Activated B cell treated with CpG ODN at 0.5 μM for 24 hours (primary cell): ENCODE measurements at regions of chr16 and their contacts with region 1.

Region 1: GRCh38 chr16:68508641-68509240 is 30.4 kb upstream of the ZFP90 start:
- DNase-seq: no peak
- ATAC-seq: no peak
- H3K4me3 Mint-ChIP-seq: no peak overlapping the region
- H3K27ac Mint-ChIP-seq: no peak overlapping the region
- H3K4me1 Mint-ChIP-seq: peaks cover 5% of the 10 kb centered on the region
- H3K27me3 Mint-ChIP-seq: peaks cover 8% of the 10 kb centered on the region
- CTCF ChIP-seq: no peak

Region 2: GRCh38 chr16:67892899-67893742 is 615.6 kb before region 1 on chr16 and contains the start of gene PSKH1:
- CTCF ChIA-PET with region 1: no interaction called
- POLR2A ChIA-PET with region 1: no interaction called
- intact Hi-C with region 1: no loop called
- DNase-seq: peak; percentile 80
- ATAC-seq: peak; percentile 99
- H3K4me3 Mint-ChIP-seq: peak within 1 kb of the TSS; percentile 94
- H3K27ac Mint-ChIP-seq: peak within 1 kb of the TSS; percentile 86
- H3K4me1 Mint-ChIP-seq: peaks cover 31% of the 10 kb centered on the region
- H3K27me3 Mint-ChIP-seq: no peaks in the 10 kb centered on the region
- CTCF ChIP-seq: no peak
- total RNA-seq, gene PSKH1: 19.2 and 22.0 TPM in 2 replicates

Region 3: GRCh38 chr16:68367030-68367429 is 141.7 kb before region 1 on chr16:
- CTCF ChIA-PET with region 1: interaction called, 5 read pairs
- POLR2A ChIA-PET with region 1: no interaction called
- intact Hi-C with region 1: loop called (anchors 1 kb)
- DNase-seq: no peak
- ATAC-seq: no peak
- H3K4me3 Mint-ChIP-seq: no peak overlapping the region
- H3K27ac Mint-ChIP-seq: no peak overlapping the region
- H3K4me1 Mint-ChIP-seq: peaks cover 54% of the 10 kb centered on the region
- H3K27me3 Mint-ChIP-seq: no peaks in the 10 kb centered on the region
- CTCF ChIP-seq: no peak

Region 4: DNA sequence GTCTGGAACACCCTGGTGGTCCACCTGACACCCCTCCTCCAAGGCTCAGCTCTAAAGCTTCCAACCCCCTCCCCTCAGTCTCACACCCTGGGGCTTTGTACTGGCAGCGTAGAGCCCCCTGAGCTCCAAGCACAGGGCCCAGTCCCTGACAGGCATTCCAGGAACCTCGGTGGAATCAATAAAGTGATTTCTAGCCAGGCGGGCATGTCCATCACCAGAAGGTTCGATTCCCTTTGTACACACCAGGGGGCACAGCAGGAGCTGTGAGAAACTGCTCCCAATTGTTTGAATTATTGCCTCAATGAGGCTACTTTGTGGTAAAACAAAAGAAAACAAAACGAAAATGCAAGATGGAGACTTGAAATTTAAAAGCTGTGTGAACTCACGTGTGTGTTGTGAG is 112.3 kb before region 1 on chr16:
- CTCF ChIA-PET with region 1: interaction called, 24 read pairs
- POLR2A ChIA-PET with region 1: no interaction called
- intact Hi-C with region 1: no loop called
- DNase-seq: no peak
- ATAC-seq: peak; percentile 49
- H3K4me3 Mint-ChIP-seq: no peak overlapping the region
- H3K27ac Mint-ChIP-seq: no peak overlapping the region
- H3K4me1 Mint-ChIP-seq: no peaks in the 10 kb centered on the region
- H3K27me3 Mint-ChIP-seq: no peaks in the 10 kb centered on the region
- CTCF ChIP-seq: no peak

Region 5: GRCh38 chr16:68417711-68418301 is 90.9 kb before region 1 on chr16:
- CTCF ChIA-PET with region 1: interaction called, 11 read pairs
- POLR2A ChIA-PET with region 1: interaction called, 3 read pairs
- intact Hi-C with region 1: no loop called
- DNase-seq: peak; percentile 29
- ATAC-seq: peak; percentile 85
- H3K4me3 Mint-ChIP-seq: peak overlapping the region; percentile 76
- H3K27ac Mint-ChIP-seq: peak overlapping the region; percentile 94
- H3K4me1 Mint-ChIP-seq: peaks cover 30% of the 10 kb centered on the region
- H3K27me3 Mint-ChIP-seq: no peaks in the 10 kb centered on the region
- CTCF ChIP-seq: no peak

Region 6: DNA sequence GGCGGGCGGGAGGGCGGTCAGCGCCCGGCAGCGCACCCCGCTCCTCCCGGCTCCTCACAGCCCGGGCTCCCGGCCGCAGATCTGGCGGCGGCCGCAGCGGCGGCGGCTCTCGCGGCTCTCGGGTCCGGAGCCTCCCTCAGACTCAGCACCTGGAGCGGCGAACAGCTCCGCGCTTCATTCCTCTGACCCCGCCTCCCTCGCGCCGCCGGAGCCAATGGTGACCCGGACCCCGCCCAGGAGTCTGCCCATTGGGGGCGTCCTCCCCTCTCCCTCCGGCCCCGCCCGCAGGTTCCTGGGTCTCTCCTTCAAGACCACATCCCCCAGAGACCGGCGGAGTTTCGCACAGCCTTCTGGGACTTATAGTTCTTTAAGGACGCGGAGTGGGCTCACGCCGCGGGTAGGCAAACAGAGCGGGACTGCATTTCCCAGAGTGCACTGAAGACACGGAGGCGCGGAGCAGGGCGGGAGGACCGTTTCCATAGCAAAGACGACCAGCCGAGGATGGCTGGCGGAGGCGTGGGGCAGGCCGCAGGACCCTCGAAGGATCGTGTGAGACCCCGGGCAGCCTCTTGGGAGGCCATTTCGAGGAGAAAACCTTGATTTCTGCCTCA is 60.3 kb before region 1 on chr16 and contains the start of gene SMPD3:
- CTCF ChIA-PET with region 1: interaction called, 3 read pairs
- POLR2A ChIA-PET with region 1: interaction called, 4 read pairs
- intact Hi-C with region 1: loop called (anchors 1 kb)
- DNase-seq: peak; percentile 95
- ATAC-seq: peak; percentile 98
- H3K4me3 Mint-ChIP-seq: peak within 1 kb of the TSS; percentile 61
- H3K27ac Mint-ChIP-seq: peak within 1 kb of the TSS; percentile 7
- H3K4me1 Mint-ChIP-seq: peaks cover 23% of the 10 kb centered on the region
- H3K27me3 Mint-ChIP-seq: peaks cover 12% of the 10 kb centered on the region
- CTCF ChIP-seq: no peak
- total RNA-seq, gene SMPD3: 0.35 and 0.76 TPM in 2 replicates

Region 7: DNA sequence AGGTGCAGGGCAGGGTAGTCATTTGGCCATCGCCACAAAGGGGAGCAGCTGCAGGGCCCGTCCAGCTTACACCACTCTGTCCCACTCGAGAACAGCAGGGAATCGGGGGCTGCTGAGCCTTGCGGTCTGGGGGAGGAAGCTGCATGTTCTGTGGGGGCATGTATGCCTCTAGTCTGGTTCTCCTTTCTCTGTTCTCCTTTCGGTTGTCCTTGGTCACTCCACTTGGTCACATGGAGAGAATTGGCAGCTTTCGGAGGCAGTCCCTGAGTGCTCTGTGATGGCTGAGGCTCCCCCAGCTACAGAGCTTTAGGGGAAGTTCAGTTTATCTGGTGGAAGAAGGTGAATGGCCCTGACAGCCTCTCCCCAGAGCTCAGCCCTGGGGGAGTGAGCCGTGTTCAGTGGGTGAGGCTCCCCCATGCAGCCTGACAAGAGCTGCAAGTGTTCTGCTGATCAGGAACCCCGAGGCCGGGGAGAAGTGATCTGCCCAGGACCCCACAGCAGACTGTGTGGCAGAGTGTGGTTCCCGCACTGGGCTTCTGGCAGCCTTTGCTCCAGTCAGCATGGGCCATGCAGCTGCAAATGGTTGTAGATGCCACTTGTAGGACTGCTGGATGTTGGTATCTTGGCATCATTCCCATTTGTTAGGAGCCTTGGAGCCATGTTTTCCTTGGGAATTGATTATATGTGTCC is 38.1 kb before region 1 on chr16:
- CTCF ChIA-PET with region 1: interaction called, 11 read pairs
- POLR2A ChIA-PET with region 1: no interaction called
- intact Hi-C with region 1: no loop called
- DNase-seq: peak; percentile 40
- ATAC-seq: peak; percentile 92
- H3K4me3 Mint-ChIP-seq: peak overlapping the region; percentile 80
- H3K27ac Mint-ChIP-seq: peak overlapping the region; percentile 98
- H3K4me1 Mint-ChIP-seq: peaks cover 58% of the 10 kb centered on the region
- H3K27me3 Mint-ChIP-seq: no peaks in the 10 kb centered on the region
- CTCF ChIP-seq: no peak

Region 8: GRCh38 chr16:68520649-68521086 is 11.9 kb after region 1 on chr16:
- CTCF ChIA-PET with region 1: interaction called, 5 read pairs
- POLR2A ChIA-PET with region 1: interaction called, 3 read pairs
- intact Hi-C with region 1: loop called (anchors 1 kb)
- DNase-seq: peak; percentile 69
- ATAC-seq: peak; percentile 98
- H3K4me3 Mint-ChIP-seq: peak overlapping the region; percentile 52
- H3K27ac Mint-ChIP-seq: peak overlapping the region; percentile 12
- H3K4me1 Mint-ChIP-seq: peaks cover 14% of the 10 kb centered on the region
- H3K27me3 Mint-ChIP-seq: no peaks in the 10 kb centered on the region
- CTCF ChIP-seq: peak; percentile 77